Caco-2 (cell line): ENCODE measurements at regions of chr13 and their contacts with region 1.

Region 1: GRCh38 chr13:49996951-49997895 is at the start of gene TRIM13:
- DNase-seq: peak; percentile 91
- H3K4me3 ChIP-seq: peak within 1 kb of the TSS; percentile 77
- H3K4me3 Mint-ChIP-seq: peak within 1 kb of the TSS; percentile 92
- H3K27ac Mint-ChIP-seq: peak within 1 kb of the TSS; percentile 91
- H3K4me1 ChIP-seq: peaks cover 29% of the 10 kb centered on the region
- H3K4me1 Mint-ChIP-seq: peaks cover 9% of the 10 kb centered on the region
- H3K27me3 ChIP-seq: no peaks in the 10 kb centered on the region
- H3K27me3 Mint-ChIP-seq: no peaks in the 10 kb centered on the region
- CTCF ChIP-seq: peak; percentile 79 to 93
- total RNA-seq, gene TRIM13: 16.5 and 21.0 TPM in 2 replicates

Region 2: GRCh38 chr13:50123862-50124536 is 126.8 kb after region 1 on chr13:
- CTCF ChIA-PET with region 1: interaction called, 6 read pairs
- POLR2A ChIA-PET with region 1: interaction called, 8 read pairs
- intact Hi-C with region 1: loop called (anchors 5 kb)
- DNase-seq: peak; percentile 95 to 98
- H3K4me3 ChIP-seq: peak overlapping the region; percentile 100
- H3K4me3 Mint-ChIP-seq: peak overlapping the region; percentile 95
- H3K27ac Mint-ChIP-seq: peak overlapping the region; percentile 90
- H3K4me1 ChIP-seq: peaks cover 22% of the 10 kb centered on the region
- H3K4me1 Mint-ChIP-seq: peaks cover 26% of the 10 kb centered on the region
- H3K27me3 ChIP-seq: no peaks in the 10 kb centered on the region
- H3K27me3 Mint-ChIP-seq: no peaks in the 10 kb centered on the region
- CTCF ChIP-seq: no peak

Region 3: DNA sequence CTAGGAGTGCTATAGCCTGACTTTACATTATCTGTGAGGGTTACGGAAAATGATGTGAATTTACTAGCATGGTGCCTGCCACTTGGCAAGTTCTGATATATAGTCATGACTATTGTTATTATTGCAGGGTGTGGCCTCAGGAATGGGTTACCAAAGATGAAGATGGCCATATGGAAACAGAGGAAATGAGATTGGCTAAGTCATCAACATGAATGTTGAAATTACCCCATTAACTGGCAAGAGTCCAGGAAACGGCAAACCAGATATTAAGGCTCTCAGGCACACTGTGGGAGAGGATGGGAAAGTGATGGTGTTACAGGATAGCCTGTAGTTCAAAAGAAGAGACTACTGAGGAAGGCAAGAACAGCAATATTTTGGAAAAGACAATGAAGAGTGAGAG is 201.3 kb after region 1 on chr13:
- CTCF ChIA-PET with region 1: no interaction called
- POLR2A ChIA-PET with region 1: no interaction called
- intact Hi-C with region 1: no loop called
- DNase-seq: no peak
- H3K4me3 ChIP-seq: no peak overlapping the region
- H3K4me3 Mint-ChIP-seq: no peak overlapping the region
- H3K27ac Mint-ChIP-seq: no peak overlapping the region
- H3K4me1 ChIP-seq: no peaks in the 10 kb centered on the region
- H3K4me1 Mint-ChIP-seq: no peaks in the 10 kb centered on the region
- H3K27me3 ChIP-seq: no peaks in the 10 kb centered on the region
- H3K27me3 Mint-ChIP-seq: no peaks in the 10 kb centered on the region
- CTCF ChIP-seq: no peak